ENCODE measurements at regions of chr7 and their contacts with region 1.

Region 1: DNA sequence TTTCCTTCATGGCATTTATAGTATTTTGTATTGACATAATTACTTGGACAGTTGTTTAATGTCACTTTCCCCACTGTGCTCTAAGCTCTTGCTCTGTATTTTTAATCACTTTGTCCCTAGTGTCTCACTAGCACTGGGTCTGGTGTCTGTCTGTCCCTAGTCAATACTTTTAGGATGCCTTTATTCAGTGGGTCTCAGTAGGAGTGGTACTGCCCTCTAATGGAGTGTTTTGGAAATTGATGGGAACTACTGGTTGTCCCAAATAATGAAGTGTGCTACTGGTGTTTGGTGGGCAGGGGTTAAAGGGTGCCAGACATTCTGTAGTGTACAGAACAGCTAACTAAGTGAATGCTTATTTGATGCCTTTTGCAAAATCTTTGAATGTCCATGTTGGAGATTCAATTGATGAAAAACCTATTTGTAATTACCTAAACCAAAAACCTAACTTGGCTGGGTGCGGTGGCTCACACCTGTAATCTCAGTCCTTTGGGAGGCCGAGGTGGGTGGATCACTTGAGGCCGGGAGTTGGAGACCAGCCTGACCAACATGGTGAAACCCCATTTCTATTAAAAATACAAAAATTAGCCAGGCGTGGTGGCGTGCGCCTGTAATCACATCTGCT is 33.3 kb downstream of the CDK14 start:
- DNase-seq: no peak
- ATAC-seq: peak in 3 of 4 donors; percentile 73 to 76 (median 75)
- H3K4me3 ChIP-seq: no peak overlapping the region
- H3K27ac ChIP-seq: no peak overlapping the region
- H3K4me1 ChIP-seq: peaks cover 4% of the 10 kb centered on the region
- H3K27me3 ChIP-seq: no peaks in the 10 kb centered on the region
- CTCF ChIP-seq: peak; percentile 53

Region 2: DNA sequence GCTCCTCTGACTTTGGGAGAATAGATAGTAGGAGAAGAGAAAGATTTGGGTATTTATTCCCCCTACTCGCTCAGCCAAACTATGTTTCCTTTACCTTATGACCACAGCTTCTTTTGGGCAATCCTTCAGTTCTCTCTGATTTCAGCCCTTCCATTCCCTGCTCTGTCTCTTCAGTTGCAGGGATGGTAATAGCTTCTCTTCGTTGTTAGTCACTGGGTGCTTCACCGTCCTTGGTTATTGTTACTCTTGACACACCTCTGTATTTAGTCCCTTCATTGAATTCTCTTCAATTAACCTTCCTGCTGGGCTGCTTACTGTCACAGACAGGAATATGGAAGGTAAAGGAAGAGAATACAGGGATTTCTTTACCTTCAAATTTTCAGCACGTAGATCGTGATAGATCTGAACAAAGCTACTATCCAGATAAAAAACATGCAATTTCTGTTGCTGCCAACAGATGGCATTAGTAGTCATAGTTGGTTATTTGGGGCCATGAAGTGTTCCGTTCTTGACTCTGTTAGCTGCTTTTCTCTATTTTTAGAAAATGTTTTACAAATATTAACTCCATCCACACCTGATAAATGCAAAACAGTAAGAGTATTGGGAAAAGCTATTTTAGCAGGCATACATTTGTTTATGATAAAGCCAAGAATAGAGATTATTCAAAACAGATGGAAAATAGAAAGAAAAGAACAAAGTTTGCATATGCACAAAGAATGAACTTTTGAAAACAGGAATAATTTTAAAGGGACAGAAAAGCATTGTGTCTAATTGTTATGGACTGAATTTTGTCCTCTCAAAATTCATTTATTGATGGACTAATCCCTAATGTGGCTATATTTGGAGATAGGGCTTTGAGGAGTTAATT is 174.0 kb before region 1 on chr7:
- intact Hi-C with region 1: loop called (anchors 5 kb)
- DNase-seq: no peak
- ATAC-seq: peak in 3 of 4 donors; percentile 49 to 83 (median 59)
- H3K4me3 ChIP-seq: peak overlapping the region; percentile 44
- H3K27ac ChIP-seq: no peak overlapping the region
- H3K4me1 ChIP-seq: no peaks in the 10 kb centered on the region
- H3K27me3 ChIP-seq: no peaks in the 10 kb centered on the region
- CTCF ChIP-seq: peak; percentile 76

Region 3: GRCh38 chr7:90552521-90552920 is 76.9 kb before region 1 on chr7:
- intact Hi-C with region 1: loop called in 1 of 2 experiments (anchors 2 kb)
- DNase-seq: no peak
- ATAC-seq: no peak
- H3K4me3 ChIP-seq: no peak overlapping the region
- H3K27ac ChIP-seq: no peak overlapping the region
- H3K4me1 ChIP-seq: no peaks in the 10 kb centered on the region
- H3K27me3 ChIP-seq: no peaks in the 10 kb centered on the region
- CTCF ChIP-seq: peak; percentile 53

Measured in psoas muscle (tissue), 8 donors.